Activated CD4-positive, alpha-beta memory T cell treated with anti-CD3 and anti-CD28 coated beads, Interleukin-2, amount 10 ng/mL, durations not matched to agents 7 days and 5 days (primary cell): ENCODE measurements at regions of chr9 and their contacts with region 1.

Region 1: GRCh38 chr9:131366761-131367401 is 27.0 kb upstream of the PRRC2B start:
- DNase-seq: no peak
- H3K4me3 Mint-ChIP-seq: no peak overlapping the region
- H3K27ac Mint-ChIP-seq: no peak overlapping the region
- H3K4me1 Mint-ChIP-seq: peaks cover 2% of the 10 kb centered on the region
- H3K27me3 Mint-ChIP-seq: no peaks in the 10 kb centered on the region

Region 2: GRCh38 chr9:131394464-131395156 is 27.7 kb after region 1 on chr9:
- CTCF ChIA-PET with region 1: no interaction called
- POLR2A ChIA-PET with region 1: interaction called, 42 read pairs
- DNase-seq: peak; percentile 57
- H3K4me3 Mint-ChIP-seq: peak overlapping the region; percentile 81
- H3K27ac Mint-ChIP-seq: peak overlapping the region; percentile 92
- H3K4me1 Mint-ChIP-seq: peaks cover 52% of the 10 kb centered on the region
- H3K27me3 Mint-ChIP-seq: peaks cover 7% of the 10 kb centered on the region

Region 3: DNA sequence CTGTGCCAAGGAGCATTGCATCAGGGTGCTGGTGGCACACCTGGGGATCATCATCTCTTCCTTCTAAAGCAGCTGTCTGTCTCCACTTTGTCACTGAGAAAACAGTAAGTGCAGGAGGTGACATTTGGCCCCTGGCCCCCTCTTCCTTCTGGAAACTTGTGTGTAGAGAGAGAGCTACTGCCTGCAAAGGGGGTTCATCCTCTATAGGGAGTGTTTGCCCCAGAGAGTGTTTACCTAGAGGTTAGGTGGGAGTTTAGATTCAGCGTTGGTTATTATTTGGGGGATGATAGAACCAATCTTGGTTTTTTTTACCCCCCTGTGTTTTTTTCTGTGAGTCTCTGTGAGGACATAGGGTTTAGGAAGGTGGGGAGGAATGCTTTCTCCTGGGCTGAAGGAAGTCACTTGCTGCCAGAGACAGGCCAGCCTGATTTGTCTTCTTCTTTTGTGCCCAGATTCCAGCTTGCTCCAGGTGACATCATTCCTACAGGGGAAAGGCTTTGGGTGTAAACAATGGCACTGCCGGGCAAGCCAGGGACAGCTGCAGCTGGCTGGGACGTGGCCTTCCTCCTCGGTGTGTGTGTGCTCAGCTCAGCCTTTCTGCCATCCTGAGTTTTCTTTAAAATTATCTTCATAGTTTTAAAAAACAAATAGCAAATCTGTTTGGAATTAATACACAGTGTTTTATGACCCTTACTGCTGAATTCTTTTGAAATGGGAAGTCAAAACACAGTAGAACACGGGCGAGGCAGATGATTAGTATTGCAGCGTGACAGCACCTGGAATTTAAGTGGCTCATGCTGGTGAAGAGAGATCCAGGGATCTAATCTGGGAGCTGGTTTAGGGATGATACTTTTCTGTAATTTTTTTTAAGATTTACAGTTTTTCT is 51.5 kb after region 1 on chr9:
- CTCF ChIA-PET with region 1: no interaction called
- POLR2A ChIA-PET with region 1: interaction called, 14 read pairs
- DNase-seq: no peak
- H3K4me3 Mint-ChIP-seq: peak overlapping the region; percentile 26
- H3K27ac Mint-ChIP-seq: peak overlapping the region; percentile 77
- H3K4me1 Mint-ChIP-seq: peaks cover 76% of the 10 kb centered on the region
- H3K27me3 Mint-ChIP-seq: no peaks in the 10 kb centered on the region

Region 4: GRCh38 chr9:131436376-131436775 is 69.5 kb after region 1 on chr9:
- CTCF ChIA-PET with region 1: no interaction called
- POLR2A ChIA-PET with region 1: no interaction called
- DNase-seq: no peak
- H3K4me3 Mint-ChIP-seq: no peak overlapping the region
- H3K27ac Mint-ChIP-seq: no peak overlapping the region
- H3K4me1 Mint-ChIP-seq: peaks cover 14% of the 10 kb centered on the region
- H3K27me3 Mint-ChIP-seq: no peaks in the 10 kb centered on the region

Region 5: GRCh38 chr9:131500939-131501541 is 134.2 kb after region 1 on chr9:
- CTCF ChIA-PET with region 1: interaction called, 8 read pairs
- POLR2A ChIA-PET with region 1: interaction called, 16 read pairs
- DNase-seq: peak; percentile 71
- H3K4me3 Mint-ChIP-seq: peak overlapping the region; percentile 60
- H3K27ac Mint-ChIP-seq: peak overlapping the region; percentile 88
- H3K4me1 Mint-ChIP-seq: peaks cover 57% of the 10 kb centered on the region
- H3K27me3 Mint-ChIP-seq: no peaks in the 10 kb centered on the region